CD4-positive, alpha-beta T cell (primary cell): ENCODE measurements at regions of chr15 and their contacts with region 1.

Region 1: GRCh38 chr15:66386204-66387123 is at the start of gene MAP2K1:
- DNase-seq: peak; percentile 94 to 100 (median 98)
- ATAC-seq: peak; percentile 82
- H3K4me3 ChIP-seq: peak within 1 kb of the TSS; percentile 75
- H3K4me3 Mint-ChIP-seq: peak within 1 kb of the TSS; percentile 99
- H3K27ac ChIP-seq: peak within 1 kb of the TSS; percentile 57 to 66
- H3K27ac Mint-ChIP-seq: peak within 1 kb of the TSS; percentile 96
- H3K4me1 ChIP-seq: peaks cover 46% of the 10 kb centered on the region
- H3K4me1 Mint-ChIP-seq: peaks cover 59% of the 10 kb centered on the region
- H3K27me3 ChIP-seq: no peaks in the 10 kb centered on the region
- H3K27me3 Mint-ChIP-seq: no peaks in the 10 kb centered on the region
- CTCF ChIP-seq: peak; percentile 90
- total RNA-seq, gene MAP2K1: 33.8 to 34.7 TPM

Region 2: GRCh38 chr15:66293419-66294156 is 92.9 kb before region 1 on chr15 and contains the start of gene DIS3L:
- CTCF ChIA-PET with region 1: interaction called, 3 read pairs
- POLR2A ChIA-PET with region 1: interaction called, 5 read pairs
- intact Hi-C with region 1: loop called in 1 of 2 experiments (anchors 10 kb)
- DNase-seq: peak; percentile 36 to 86 (median 58)
- ATAC-seq: peak; percentile 72
- H3K4me3 ChIP-seq: peak within 1 kb of the TSS; percentile 75
- H3K4me3 Mint-ChIP-seq: peak within 1 kb of the TSS; percentile 92
- H3K27ac ChIP-seq: peak within 1 kb of the TSS; percentile 80 to 93
- H3K27ac Mint-ChIP-seq: peak within 1 kb of the TSS; percentile 97
- H3K4me1 ChIP-seq: peaks cover 33% of the 10 kb centered on the region
- H3K4me1 Mint-ChIP-seq: peaks cover 49% of the 10 kb centered on the region
- H3K27me3 ChIP-seq: no peaks in the 10 kb centered on the region
- H3K27me3 Mint-ChIP-seq: no peaks in the 10 kb centered on the region
- CTCF ChIP-seq: no peak
- total RNA-seq, gene DIS3L: 22.6 to 24.3 TPM

Region 3: GRCh38 chr15:66369773-66370651 is 16.5 kb before region 1 on chr15:
- CTCF ChIA-PET with region 1: interaction called, 6 read pairs
- POLR2A ChIA-PET with region 1: interaction called, 12 read pairs
- intact Hi-C with region 1: no loop called
- DNase-seq: peak in 4 of 14 experiments; percentile 30 to 65 (median 60)
- ATAC-seq: peak; percentile 63
- H3K4me3 ChIP-seq: peak overlapping the region; percentile 47
- H3K4me3 Mint-ChIP-seq: peak overlapping the region; percentile 83
- H3K27ac ChIP-seq: peak overlapping the region; percentile 21 to 78
- H3K27ac Mint-ChIP-seq: peak overlapping the region; percentile 67
- H3K4me1 ChIP-seq: peaks cover 12% of the 10 kb centered on the region
- H3K4me1 Mint-ChIP-seq: peaks cover 15% of the 10 kb centered on the region
- H3K27me3 ChIP-seq: no peaks in the 10 kb centered on the region
- H3K27me3 Mint-ChIP-seq: no peaks in the 10 kb centered on the region
- CTCF ChIP-seq: no peak

Region 4: DNA sequence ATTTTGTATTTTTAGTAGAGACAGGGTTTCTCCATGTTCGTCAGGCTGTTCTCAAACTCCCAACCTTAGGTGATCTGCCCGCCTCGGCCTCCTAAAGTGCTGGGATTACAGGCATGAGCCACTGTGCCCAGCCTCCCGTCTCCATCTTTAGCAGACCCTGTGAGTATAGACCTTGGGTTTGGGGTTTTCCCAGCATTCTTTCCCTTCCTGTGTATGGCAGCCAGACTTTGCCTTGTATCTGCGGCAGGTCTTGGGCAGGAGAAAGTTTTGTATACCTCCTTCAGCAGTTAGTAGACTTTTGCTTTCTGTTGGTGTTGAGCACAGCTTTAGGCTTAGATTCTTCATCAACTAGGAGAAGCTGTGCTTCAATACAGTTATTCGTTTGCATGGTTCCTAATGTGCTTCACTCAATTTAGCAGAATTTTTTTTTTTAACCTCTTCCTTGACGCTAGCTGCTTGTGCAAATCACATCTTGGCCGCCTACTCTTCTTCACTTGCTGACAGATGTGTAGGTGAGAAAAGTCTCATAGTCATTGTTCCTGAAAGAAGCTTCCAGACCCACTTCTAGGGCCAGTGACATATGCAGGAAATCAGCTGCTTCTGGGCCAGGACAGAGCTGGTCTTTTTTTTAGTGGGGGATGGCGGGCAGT is 38.6 kb after region 1 on chr15:
- CTCF ChIA-PET with region 1: no interaction called
- POLR2A ChIA-PET with region 1: no interaction called
- intact Hi-C with region 1: loop called (anchors 5 kb)
- DNase-seq: no peak
- ATAC-seq: no peak
- H3K4me3 ChIP-seq: no peak overlapping the region
- H3K4me3 Mint-ChIP-seq: peak overlapping the region; percentile 14
- H3K27ac ChIP-seq: no peak overlapping the region
- H3K27ac Mint-ChIP-seq: peak overlapping the region; percentile 74
- H3K4me1 ChIP-seq: peaks cover 19% of the 10 kb centered on the region
- H3K4me1 Mint-ChIP-seq: peaks cover 65% of the 10 kb centered on the region
- H3K27me3 ChIP-seq: no peaks in the 10 kb centered on the region
- H3K27me3 Mint-ChIP-seq: no peaks in the 10 kb centered on the region
- CTCF ChIP-seq: no peak

Region 5: DNA sequence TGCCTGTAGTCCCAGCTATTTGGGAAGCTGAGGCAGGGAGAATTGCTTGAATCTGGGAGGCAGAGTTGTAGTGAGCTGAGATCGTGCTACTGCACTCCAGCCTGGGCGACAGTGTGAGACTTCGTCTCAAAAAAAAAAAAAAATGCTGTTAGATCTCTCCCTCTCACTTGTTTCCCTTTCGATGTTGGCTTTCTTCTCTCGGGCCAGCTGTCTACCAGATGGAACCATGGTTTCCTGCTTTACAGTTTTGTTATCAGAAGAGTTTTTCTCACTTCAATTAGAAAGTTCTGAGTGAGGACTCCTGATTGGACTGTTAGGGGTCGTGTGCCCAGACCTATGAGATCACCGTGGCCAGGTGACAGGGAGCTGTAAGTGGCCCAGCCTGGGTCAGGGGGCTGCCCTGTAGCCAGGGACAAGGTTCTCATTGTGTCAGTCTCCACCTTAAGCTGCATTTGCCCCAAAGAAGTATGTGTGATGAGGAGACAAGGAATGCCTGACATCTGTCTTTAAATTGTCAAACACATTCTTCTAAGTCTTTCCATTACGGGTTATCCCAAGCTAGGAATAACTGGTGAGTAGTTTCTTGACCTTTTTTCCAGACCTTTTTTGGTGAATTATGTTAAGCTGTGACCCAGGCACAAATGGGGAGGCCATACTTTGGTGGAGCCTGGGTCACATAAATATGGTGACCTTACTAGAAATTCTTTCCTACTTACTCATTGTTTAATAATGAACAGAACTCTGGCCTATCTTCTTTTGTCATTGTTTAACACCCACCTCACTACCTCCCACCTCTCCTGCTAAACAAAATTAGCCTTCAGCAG is 85.9 kb after region 1 on chr15:
- CTCF ChIA-PET with region 1: interaction called, 5 read pairs
- POLR2A ChIA-PET with region 1: interaction called, 37 read pairs
- intact Hi-C with region 1: loop called in 1 of 2 experiments (anchors 1 kb)
- DNase-seq: peak; percentile 7 to 83 (median 31)
- ATAC-seq: peak; percentile 94
- H3K4me3 ChIP-seq: peak overlapping the region; percentile 33
- H3K4me3 Mint-ChIP-seq: peak overlapping the region; percentile 69
- H3K27ac ChIP-seq: peak overlapping the region; percentile 25 to 48
- H3K27ac Mint-ChIP-seq: peak overlapping the region; percentile 88
- H3K4me1 ChIP-seq: peaks cover 23% of the 10 kb centered on the region
- H3K4me1 Mint-ChIP-seq: peaks cover 58% of the 10 kb centered on the region
- H3K27me3 ChIP-seq: no peaks in the 10 kb centered on the region
- H3K27me3 Mint-ChIP-seq: no peaks in the 10 kb centered on the region
- CTCF ChIP-seq: no peak

Region 6: DNA sequence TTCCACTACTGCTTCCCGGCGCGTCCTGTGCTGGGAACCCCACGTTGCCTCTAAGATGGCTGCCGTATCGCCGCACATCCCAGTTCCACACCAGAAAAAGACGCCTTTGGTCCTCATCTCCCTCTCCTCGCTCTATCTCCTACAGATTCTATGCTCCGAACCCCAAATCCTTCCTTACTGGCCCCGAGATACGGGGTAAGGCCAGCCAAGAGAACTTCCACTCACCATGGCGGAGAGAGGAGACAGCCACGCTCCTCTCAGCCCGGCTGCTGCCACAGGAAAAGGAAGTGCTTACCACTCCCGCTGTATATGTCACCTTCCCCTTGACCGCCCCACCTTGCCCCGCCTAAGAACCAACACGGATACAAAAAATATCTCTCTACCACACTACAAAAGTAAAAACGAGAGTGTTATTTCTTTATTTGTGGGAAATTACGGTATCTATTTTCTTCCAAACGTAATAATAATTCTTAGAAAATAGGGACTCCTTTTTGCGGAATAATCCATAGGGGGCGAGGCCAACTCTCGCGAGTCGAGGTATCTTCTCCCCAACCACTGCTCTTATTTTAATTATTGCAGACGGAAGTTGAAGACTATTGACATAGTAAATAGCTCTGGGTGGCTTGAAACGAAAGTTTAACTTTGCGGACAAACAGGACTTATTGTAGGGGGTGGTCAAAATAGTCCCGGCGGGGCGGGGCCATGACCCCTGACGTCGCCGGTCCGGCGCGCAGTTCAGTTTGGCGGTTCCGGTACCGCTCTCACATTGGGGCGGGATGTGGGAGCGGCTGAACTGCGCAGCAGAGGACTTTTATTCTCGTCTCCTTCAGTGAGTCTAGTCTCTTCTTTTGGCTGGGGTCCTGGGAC is 118.3 kb after region 1 on chr15 and contains the starts of genes RPL4 and ZWILCH:
- CTCF ChIA-PET with region 1: interaction called, 107 read pairs
- POLR2A ChIA-PET with region 1: interaction called, 94 read pairs
- intact Hi-C with region 1: no loop called
- DNase-seq: peak; percentile 69 to 91 (median 77)
- ATAC-seq: peak; percentile 85
- H3K4me3 ChIP-seq: peak within 1 kb of the TSS; percentile 95
- H3K4me3 Mint-ChIP-seq: peak within 1 kb of the TSS; percentile 100
- H3K27ac ChIP-seq: peak within 1 kb of the TSS; percentile 85 to 95
- H3K27ac Mint-ChIP-seq: peak within 1 kb of the TSS; percentile 93
- H3K4me1 ChIP-seq: peaks cover 24% of the 10 kb centered on the region
- H3K4me1 Mint-ChIP-seq: peaks cover 51% of the 10 kb centered on the region
- H3K27me3 ChIP-seq: no peaks in the 10 kb centered on the region
- H3K27me3 Mint-ChIP-seq: no peaks in the 10 kb centered on the region
- CTCF ChIP-seq: no peak
- total RNA-seq, gene RPL4: 4,558 to 4,627 TPM
- total RNA-seq, gene ZWILCH: 6.8 to 7.2 TPM